Naive thymus-derived CD4-positive, alpha-beta T cell (primary cell): ENCODE measurements at regions of chrX and their contacts with region 1.

Region 1: GRCh38 chrX:7147978-7148824 is at the start of gene PUDP:
- DNase-seq: peak; percentile 80 to 96 (median 89)
- ATAC-seq: peak; percentile 90
- H3K4me3 ChIP-seq: peak within 1 kb of the TSS; percentile 99
- H3K4me3 Mint-ChIP-seq: peak within 1 kb of the TSS; percentile 79 to 95 (median 90)
- H3K27ac ChIP-seq: peak within 1 kb of the TSS; percentile 69
- H3K27ac Mint-ChIP-seq: peak within 1 kb of the TSS; percentile 75 to 96 (median 90)
- H3K4me1 ChIP-seq: no peaks in the 10 kb centered on the region
- H3K4me1 Mint-ChIP-seq: peaks cover 9 to 47% (median 26%) of the 10 kb centered on the region in 7 donors
- H3K27me3 ChIP-seq: no peaks in the 10 kb centered on the region
- H3K27me3 Mint-ChIP-seq: no peaks in the 10 kb centered on the region
- total RNA-seq, gene PUDP: 6.2 to 12.9 (median 10.5) TPM

Region 2: GRCh38 chrX:7068939-7069371 is 79.2 kb before region 1 on chrX:
- CTCF ChIA-PET with region 1: no interaction called
- POLR2A ChIA-PET with region 1: no interaction called
- intact Hi-C with region 1: loop called in 1 of 2 experiments (anchors 5 kb)
- DNase-seq: peak in 4 of 9 donors; percentile 24 to 31 (median 27)
- ATAC-seq: peak; percentile 50
- H3K4me3 ChIP-seq: no peak overlapping the region
- H3K4me3 Mint-ChIP-seq: peak overlapping the region; percentile 13 to 82 (median 60)
- H3K27ac ChIP-seq: peak overlapping the region; percentile 12
- H3K27ac Mint-ChIP-seq: peak overlapping the region; percentile 26 to 84 (median 74)
- H3K4me1 ChIP-seq: peaks cover 0 to 4% of the 10 kb centered on the region in 2 donors
- H3K4me1 Mint-ChIP-seq: peaks cover 20 to 75% (median 44%) of the 10 kb centered on the region in 7 donors
- H3K27me3 ChIP-seq: no peaks in the 10 kb centered on the region
- H3K27me3 Mint-ChIP-seq: no peaks in the 10 kb centered on the region

Region 3: DNA sequence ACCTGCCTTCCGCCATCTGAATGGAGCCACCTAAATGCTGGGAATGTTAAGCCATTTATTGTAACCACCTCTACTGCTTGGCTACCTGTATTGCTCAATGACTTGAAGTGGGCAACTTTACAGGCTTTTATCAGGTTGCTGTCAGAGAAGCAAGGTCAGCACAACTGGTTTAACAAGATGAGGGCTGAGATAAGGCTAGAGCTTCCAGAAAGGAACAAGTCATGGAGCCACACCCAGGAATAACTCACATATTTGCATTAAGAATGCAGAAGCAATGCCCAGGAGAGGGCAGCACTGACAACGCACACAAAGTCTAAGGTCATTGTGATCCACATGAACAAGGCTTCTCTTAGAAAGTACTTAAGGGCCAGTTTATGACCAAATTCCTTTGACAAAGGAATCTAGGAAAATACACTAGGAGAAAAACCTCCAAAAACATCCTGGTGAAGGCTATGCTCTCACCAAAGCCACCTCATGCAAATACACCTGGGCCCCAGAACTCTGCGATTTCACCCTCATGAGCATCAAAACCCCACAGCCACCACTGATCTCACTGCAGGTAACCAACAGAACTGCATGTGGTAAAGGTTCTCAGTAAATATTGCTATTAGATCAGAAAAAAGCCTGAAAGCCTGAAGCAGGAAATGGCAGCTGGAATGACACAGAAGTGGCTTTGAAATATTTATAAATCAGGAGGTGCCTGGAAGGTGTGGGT is 15.7 kb before region 1 on chrX:
- CTCF ChIA-PET with region 1: no interaction called
- POLR2A ChIA-PET with region 1: interaction called, 4 read pairs
- intact Hi-C with region 1: loop called (anchors 1 to 2 kb)
- DNase-seq: peak in 5 of 9 donors; percentile 1 to 40 (median 18)
- ATAC-seq: peak; percentile 60
- H3K4me3 ChIP-seq: no peak overlapping the region
- H3K4me3 Mint-ChIP-seq: peak overlapping the region in 3 of 10 donors; percentile 9 to 25 (median 11)
- H3K27ac ChIP-seq: no peak overlapping the region
- H3K27ac Mint-ChIP-seq: peak overlapping the region in 8 of 9 donors; percentile 12 to 87 (median 72)
- H3K4me1 ChIP-seq: no peaks in the 10 kb centered on the region
- H3K4me1 Mint-ChIP-seq: peaks cover 12 to 53% (median 39%) of the 10 kb centered on the region in 7 donors
- H3K27me3 ChIP-seq: no peaks in the 10 kb centered on the region
- H3K27me3 Mint-ChIP-seq: no peaks in the 10 kb centered on the region

Region 4: DNA sequence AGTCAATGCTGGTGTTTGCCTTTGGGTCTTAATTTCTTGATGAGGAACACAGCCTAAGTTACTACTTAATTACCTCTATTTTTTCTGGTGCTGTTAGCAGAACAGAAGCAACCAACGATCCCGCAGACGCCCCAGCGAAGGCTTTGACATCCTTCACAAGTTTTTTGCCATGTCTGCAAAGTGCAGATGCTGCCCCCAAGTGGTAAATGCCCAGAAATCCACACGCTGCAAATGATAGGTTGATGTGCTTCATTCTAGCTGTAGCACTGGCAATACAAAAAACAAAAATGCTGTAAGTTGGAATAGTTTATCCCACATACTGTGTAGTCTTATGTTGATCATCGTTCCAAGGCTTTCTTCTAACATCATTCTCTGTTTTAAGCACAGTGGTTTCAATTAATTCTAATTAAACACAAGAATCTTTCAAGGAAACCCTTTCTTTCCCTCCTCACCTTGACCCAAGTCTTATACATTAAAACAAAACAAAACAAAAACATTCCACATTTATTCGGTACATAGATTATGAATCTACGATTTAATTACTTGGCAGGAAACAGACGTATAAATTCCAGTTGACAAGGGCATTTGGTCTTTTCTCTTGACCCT is 777.8 kb after region 1 on chrX:
- CTCF ChIA-PET with region 1: interaction called, 5 read pairs
- POLR2A ChIA-PET with region 1: no interaction called
- intact Hi-C with region 1: loop called (anchors 1 kb)
- DNase-seq: peak; percentile 5 to 79 (median 62)
- ATAC-seq: peak; percentile 67
- H3K4me3 ChIP-seq: no peak overlapping the region
- H3K4me3 Mint-ChIP-seq: peak overlapping the region; percentile 38 to 99 (median 90)
- H3K27ac ChIP-seq: no peak overlapping the region
- H3K27ac Mint-ChIP-seq: peak overlapping the region; percentile 33 to 99 (median 54)
- H3K4me1 ChIP-seq: peaks cover 6 to 11% of the 10 kb centered on the region in 2 donors
- H3K4me1 Mint-ChIP-seq: peaks cover 0 to 37% (median 20%) of the 10 kb centered on the region in 7 donors
- H3K27me3 ChIP-seq: no peaks in the 10 kb centered on the region
- H3K27me3 Mint-ChIP-seq: no peaks in the 10 kb centered on the region